ENCODE measurements at regions of chr13 and their contacts with region 1.

Region 1: DNA sequence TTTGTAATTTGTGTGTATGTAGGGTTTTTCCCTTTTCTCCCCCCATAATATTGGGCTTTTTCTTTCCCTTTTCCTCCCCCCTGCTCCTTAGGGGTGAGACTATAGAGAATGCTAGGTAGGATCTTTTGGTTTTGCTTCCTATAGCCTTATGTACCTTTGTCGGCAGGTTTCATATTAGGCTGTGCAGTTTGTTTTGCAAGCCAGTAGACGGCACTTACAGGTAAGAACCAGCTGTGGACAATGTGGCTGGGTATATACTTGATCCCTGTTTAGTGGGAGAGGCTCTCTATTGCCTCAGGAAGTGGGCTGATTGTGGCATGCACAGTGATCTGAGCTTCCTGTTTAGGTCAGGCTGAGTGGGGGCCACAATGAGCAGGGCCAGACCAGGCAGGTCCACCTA is 359.2 kb upstream of the OBI1 start:
- DNase-seq: no peak
- ATAC-seq: no peak
- H3K4me3 ChIP-seq: no peak overlapping the region
- H3K4me3 Mint-ChIP-seq: no peak overlapping the region
- H3K27ac ChIP-seq: no peak overlapping the region
- H3K27ac Mint-ChIP-seq: no peak overlapping the region
- H3K4me1 ChIP-seq: no peaks in the 10 kb centered on the region
- H3K4me1 Mint-ChIP-seq: no peaks in the 10 kb centered on the region
- H3K27me3 ChIP-seq: peaks cover 0 to 11% of the 10 kb centered on the region in 2 experiments
- H3K27me3 Mint-ChIP-seq: peaks cover 9 to 15% of the 10 kb centered on the region in 2 donors

Region 2: DNA sequence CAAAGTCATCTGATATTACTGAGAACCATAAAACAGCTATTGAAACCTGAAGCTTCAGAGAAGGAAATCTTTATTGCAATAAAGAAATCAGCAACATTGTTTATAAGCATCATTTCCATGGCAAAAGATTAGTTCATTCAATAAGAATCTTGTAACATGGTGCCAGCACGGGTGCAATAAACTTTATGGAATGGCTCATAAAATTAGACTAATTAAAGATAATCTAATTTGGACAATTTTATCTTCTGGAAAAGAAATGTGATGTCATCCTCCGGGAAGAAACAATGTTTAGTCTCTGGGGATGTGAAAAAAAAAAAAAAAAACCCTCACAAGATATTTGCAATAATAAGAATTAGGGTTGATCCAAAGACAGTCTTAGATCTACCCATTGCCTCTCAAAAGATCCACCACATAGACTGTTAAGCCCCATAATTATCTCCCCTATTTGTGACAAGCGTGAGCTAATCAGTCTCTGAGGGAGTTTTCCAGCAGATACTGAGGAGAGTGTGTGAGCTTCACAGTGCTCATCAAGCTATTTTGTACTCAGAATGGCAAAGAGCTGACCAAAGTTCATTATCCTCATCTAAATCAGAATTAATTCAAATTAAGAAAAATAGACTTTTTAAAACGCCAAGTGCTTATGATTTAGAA is 802.6 kb before region 1 on chr13:
- CTCF ChIA-PET with region 1: no interaction called
- POLR2A ChIA-PET with region 1: interaction called in 1 of 2 experiments, 18 read pairs
- DNase-seq: no peak
- ATAC-seq: no peak
- H3K4me3 ChIP-seq: no peak overlapping the region
- H3K4me3 Mint-ChIP-seq: no peak overlapping the region
- H3K27ac ChIP-seq: no peak overlapping the region
- H3K27ac Mint-ChIP-seq: no peak overlapping the region
- H3K4me1 ChIP-seq: no peaks in the 10 kb centered on the region
- H3K4me1 Mint-ChIP-seq: no peaks in the 10 kb centered on the region
- H3K27me3 ChIP-seq: no peaks in the 10 kb centered on the region
- H3K27me3 Mint-ChIP-seq: no peaks in the 10 kb centered on the region

Region 3: DNA sequence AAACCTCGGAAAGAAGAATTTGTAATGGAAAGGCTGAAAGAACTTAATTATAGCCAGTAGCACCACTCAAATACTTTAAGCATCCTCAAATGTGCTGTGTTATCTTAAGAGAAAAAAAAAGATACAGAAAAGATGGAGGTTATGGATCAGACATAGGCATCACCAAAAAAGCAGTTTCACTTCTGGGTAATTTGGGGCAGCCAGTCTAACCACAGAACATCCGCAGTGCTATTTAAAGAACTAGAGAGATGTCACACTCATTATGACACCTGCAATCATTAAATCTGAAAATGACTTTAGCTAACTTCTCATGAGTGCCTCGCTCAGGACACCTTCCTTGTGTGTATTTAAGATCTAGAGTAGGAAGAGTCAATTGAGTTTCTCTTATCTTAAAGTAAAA is 176.1 kb after region 1 on chr13:
- CTCF ChIA-PET with region 1: no interaction called
- POLR2A ChIA-PET with region 1: no interaction called
- DNase-seq: peak in 27 of 35 experiments; percentile 2 to 66 (median 15)
- ATAC-seq: peak; percentile 87 to 99 (median 88)
- H3K4me3 ChIP-seq: no peak overlapping the region
- H3K4me3 Mint-ChIP-seq: no peak overlapping the region
- H3K27ac ChIP-seq: no peak overlapping the region
- H3K27ac Mint-ChIP-seq: no peak overlapping the region
- H3K4me1 ChIP-seq: peaks cover 4% of the 10 kb centered on the region in 2 experiments
- H3K4me1 Mint-ChIP-seq: peaks cover 20 to 37% (median 24%) of the 10 kb centered on the region in 3 donors
- H3K27me3 ChIP-seq: no peaks in the 10 kb centered on the region
- H3K27me3 Mint-ChIP-seq: no peaks in the 10 kb centered on the region